ENCODE measurements at regions of chr12 and their contacts with region 1.

Region 1: DNA sequence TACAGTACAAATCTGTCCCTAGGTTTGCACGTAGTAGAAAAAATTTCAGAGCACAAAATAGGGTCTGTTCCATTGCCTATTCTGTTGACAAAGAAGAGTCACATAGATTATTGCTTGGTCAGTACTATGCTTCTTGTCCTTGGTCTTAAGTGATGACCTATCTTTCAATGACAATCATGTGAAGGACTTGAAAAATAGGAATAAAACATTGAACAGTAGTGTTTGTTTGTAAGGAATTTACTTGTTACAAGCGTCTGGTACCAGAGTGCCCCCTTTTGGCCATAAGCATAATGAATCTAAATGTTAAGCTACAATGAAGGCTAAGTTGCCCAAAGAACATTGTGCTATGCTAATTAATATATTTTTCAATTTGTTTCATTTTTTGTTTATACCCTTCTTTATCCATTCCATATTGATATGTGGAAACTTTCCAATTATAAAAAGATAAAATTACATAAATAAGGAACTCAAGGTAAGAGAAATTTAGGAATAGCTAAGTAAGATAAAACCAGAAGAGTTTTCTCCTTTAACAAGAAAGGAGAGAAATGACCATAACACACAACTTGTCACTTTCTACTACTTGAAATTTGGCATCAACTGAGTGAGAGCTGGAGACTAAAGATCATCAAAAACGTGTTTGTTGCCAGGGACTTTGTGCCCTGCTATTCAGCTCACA is 204.7 kb downstream of the EPS8 start:
- DNase-seq: peak; percentile 21
- CTCF ChIP-seq: peak; percentile 55

Region 2: GRCh38 chr12:15522565-15523187 is 61.8 kb before region 1 on chr12:
- CTCF ChIA-PET with region 1: interaction called, 328 read pairs
- POLR2A ChIA-PET with region 1: no interaction called
- DNase-seq: peak; percentile 23
- CTCF ChIP-seq: peak; percentile 56

Region 3: GRCh38 chr12:15546102-15546701 is 38.3 kb before region 1 on chr12:
- CTCF ChIA-PET with region 1: interaction called, 78 read pairs
- POLR2A ChIA-PET with region 1: no interaction called
- DNase-seq: peak; percentile 49
- CTCF ChIP-seq: no peak

Region 4: GRCh38 chr12:15563663-15564062 is 20.8 kb before region 1 on chr12:
- CTCF ChIA-PET with region 1: interaction called, 43 read pairs
- POLR2A ChIA-PET with region 1: no interaction called
- DNase-seq: no peak
- CTCF ChIP-seq: no peak

Measured in GM10248 (cell line).